Naive thymus-derived CD4-positive, alpha-beta T cell (primary cell): ENCODE measurements at regions of chr4 and their contacts with region 1.

Region 1: DNA sequence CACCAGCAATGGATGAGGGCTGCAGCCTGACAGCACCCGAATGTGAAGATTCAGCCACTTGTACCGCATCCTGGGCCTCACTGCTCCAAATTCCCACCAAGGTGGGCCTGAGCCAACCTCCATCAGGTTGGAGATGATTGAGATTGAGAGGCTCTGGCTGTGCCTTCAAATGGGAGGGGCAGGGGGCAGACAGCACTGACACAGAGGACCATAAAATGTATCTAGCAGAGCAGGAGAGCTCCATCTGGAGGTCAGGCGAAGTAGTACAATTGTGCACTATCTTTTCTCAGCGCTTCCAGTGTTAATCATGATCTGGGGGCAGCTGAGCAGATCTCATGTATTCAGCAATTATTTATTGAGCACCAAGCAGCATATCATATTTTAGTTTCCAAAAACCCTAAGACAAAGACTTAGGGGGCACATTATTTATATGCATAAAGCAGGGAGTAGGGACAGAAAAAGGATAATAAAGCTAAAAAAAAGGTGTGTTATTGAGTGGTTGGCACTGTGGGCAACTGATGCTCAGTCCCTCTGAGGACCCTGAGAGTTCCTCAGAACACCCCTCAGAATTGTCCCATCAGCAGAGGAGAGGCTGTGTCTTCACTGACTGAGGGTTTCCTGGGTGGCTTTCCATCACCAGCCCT is 31.6 kb upstream of the C1QTNF7 start:
- DNase-seq: peak in 7 of 9 donors; percentile 31 to 57 (median 50)
- ATAC-seq: peak; percentile 85
- H3K4me3 ChIP-seq: no peak overlapping the region
- H3K4me3 Mint-ChIP-seq: no peak overlapping the region
- H3K27ac ChIP-seq: no peak overlapping the region
- H3K27ac Mint-ChIP-seq: peak overlapping the region in 1 of 9 donors; percentile 68
- H3K4me1 ChIP-seq: peaks cover 7 to 12% of the 10 kb centered on the region in 2 donors
- H3K4me1 Mint-ChIP-seq: peaks cover 10 to 52% (median 37%) of the 10 kb centered on the region in 7 donors
- H3K27me3 ChIP-seq: no peaks in the 10 kb centered on the region
- H3K27me3 Mint-ChIP-seq: no peaks in the 10 kb centered on the region

Region 2: GRCh38 chr4:14853176-14853943 is 542.9 kb before region 1 on chr4:
- CTCF ChIA-PET with region 1: no interaction called
- POLR2A ChIA-PET with region 1: no interaction called
- intact Hi-C with region 1: no loop called
- DNase-seq: no peak
- ATAC-seq: no peak
- H3K4me3 ChIP-seq: no peak overlapping the region
- H3K4me3 Mint-ChIP-seq: no peak overlapping the region
- H3K27ac ChIP-seq: no peak overlapping the region
- H3K27ac Mint-ChIP-seq: no peak overlapping the region
- H3K4me1 ChIP-seq: no peaks in the 10 kb centered on the region
- H3K4me1 Mint-ChIP-seq: peaks cover 0 to 22% (median 0%) of the 10 kb centered on the region in 7 donors
- H3K27me3 ChIP-seq: no peaks in the 10 kb centered on the region
- H3K27me3 Mint-ChIP-seq: peaks cover 0 to 32% (median 18%) of the 10 kb centered on the region in 5 donors

Region 3: DNA sequence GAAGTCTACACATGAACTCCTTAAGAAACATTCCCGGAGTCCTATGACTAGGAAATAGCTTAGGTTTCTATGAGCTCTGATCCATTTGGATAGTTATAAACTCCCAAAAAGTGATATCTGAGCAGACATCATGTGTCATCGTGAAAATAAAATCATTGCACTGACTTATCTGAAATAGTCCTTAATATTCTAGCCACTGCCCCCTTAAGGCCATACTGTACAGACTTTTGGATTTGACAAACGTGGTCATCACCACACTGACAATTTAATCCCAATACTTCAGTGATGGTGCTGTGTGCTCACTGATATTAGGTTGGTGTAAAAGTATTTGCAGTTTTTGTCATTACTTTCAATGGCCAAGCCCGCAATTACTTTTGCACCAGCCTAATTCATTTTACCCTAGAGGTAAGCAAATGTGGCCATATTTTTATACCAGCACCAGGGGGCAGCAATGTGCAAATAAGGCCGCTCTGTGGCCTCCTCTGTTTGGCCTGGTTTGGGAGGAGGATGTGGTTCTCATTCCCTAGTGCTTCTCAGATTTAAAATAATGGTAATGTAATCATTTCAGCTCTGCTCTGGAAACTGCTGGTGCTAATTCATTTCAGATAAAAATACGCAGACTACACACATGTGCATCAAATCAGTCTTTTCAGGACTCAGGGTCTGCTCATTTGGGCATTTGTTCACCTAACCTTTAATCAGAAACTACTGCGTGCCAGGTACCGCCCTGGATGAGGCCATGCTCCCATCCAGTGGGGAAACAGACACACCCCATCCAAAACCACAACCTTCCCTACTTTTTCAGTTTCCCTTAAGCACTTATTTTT is 164.8 kb before region 1 on chr4:
- CTCF ChIA-PET with region 1: interaction called, 7 read pairs
- POLR2A ChIA-PET with region 1: no interaction called
- intact Hi-C with region 1: loop called (anchors 1 kb)
- DNase-seq: peak; percentile 45 to 72 (median 69)
- ATAC-seq: peak; percentile 86
- H3K4me3 ChIP-seq: no peak overlapping the region
- H3K4me3 Mint-ChIP-seq: no peak overlapping the region
- H3K27ac ChIP-seq: no peak overlapping the region
- H3K27ac Mint-ChIP-seq: peak overlapping the region in 4 of 9 donors; percentile 11 to 68 (median 44)
- H3K4me1 ChIP-seq: peaks cover 0 to 27% of the 10 kb centered on the region in 2 donors
- H3K4me1 Mint-ChIP-seq: peaks cover 24 to 39% (median 35%) of the 10 kb centered on the region in 7 donors
- H3K27me3 ChIP-seq: no peaks in the 10 kb centered on the region
- H3K27me3 Mint-ChIP-seq: peaks cover 0 to 3% (median 0%) of the 10 kb centered on the region in 5 donors

Region 4: DNA sequence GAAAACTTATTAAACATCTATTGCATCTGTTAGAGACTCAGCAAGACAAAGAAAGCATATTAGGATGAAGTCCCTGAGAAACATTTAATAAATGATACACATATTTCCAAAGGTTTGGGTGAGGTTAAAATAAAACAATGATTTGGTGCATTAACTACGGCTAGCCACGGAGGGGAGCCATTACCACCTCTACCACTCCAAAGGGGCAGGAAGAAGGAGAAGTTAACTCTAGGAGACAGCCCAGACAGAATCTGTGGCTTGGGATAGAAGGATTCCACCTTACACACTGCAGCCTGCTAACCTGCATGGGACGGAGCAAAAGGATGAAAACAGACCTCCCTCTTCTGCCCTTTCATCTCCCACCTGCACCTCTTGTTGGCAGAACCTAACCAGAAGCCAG is 157.6 kb before region 1 on chr4:
- CTCF ChIA-PET with region 1: interaction called, 3 read pairs
- POLR2A ChIA-PET with region 1: no interaction called
- intact Hi-C with region 1: loop called (anchors 1 kb)
- DNase-seq: peak in 5 of 9 donors; percentile 24 to 43 (median 32)
- ATAC-seq: peak; percentile 80
- H3K4me3 ChIP-seq: no peak overlapping the region
- H3K4me3 Mint-ChIP-seq: no peak overlapping the region
- H3K27ac ChIP-seq: no peak overlapping the region
- H3K27ac Mint-ChIP-seq: no peak overlapping the region
- H3K4me1 ChIP-seq: peaks cover 0 to 8% of the 10 kb centered on the region in 2 donors
- H3K4me1 Mint-ChIP-seq: peaks cover 9 to 14% (median 11%) of the 10 kb centered on the region in 7 donors
- H3K27me3 ChIP-seq: no peaks in the 10 kb centered on the region
- H3K27me3 Mint-ChIP-seq: no peaks in the 10 kb centered on the region

Region 5: GRCh38 chr4:15375667-15376066 is 20.6 kb before region 1 on chr4:
- CTCF ChIA-PET with region 1: interaction called, 8 read pairs
- POLR2A ChIA-PET with region 1: no interaction called
- intact Hi-C with region 1: loop called in 1 of 2 experiments (anchors 2 kb)
- DNase-seq: peak in 6 of 9 donors; percentile 7 to 44 (median 40)
- ATAC-seq: peak; percentile 63
- H3K4me3 ChIP-seq: no peak overlapping the region
- H3K4me3 Mint-ChIP-seq: peak overlapping the region in 7 of 10 donors; percentile 0 to 59 (median 20)
- H3K27ac ChIP-seq: no peak overlapping the region
- H3K27ac Mint-ChIP-seq: peak overlapping the region in 7 of 9 donors; percentile 11 to 95 (median 81)
- H3K4me1 ChIP-seq: peaks cover 0 to 13% of the 10 kb centered on the region in 2 donors
- H3K4me1 Mint-ChIP-seq: peaks cover 16 to 52% (median 43%) of the 10 kb centered on the region in 7 donors
- H3K27me3 ChIP-seq: no peaks in the 10 kb centered on the region
- H3K27me3 Mint-ChIP-seq: peaks cover 0 to 4% (median 0%) of the 10 kb centered on the region in 5 donors

Region 6: GRCh38 chr4:15410750-15411149 is 14.5 kb after region 1 on chr4:
- CTCF ChIA-PET with region 1: interaction called, 11 read pairs
- POLR2A ChIA-PET with region 1: interaction called, 6 read pairs
- intact Hi-C with region 1: loop called in 1 of 2 experiments (anchors 1 kb)
- DNase-seq: peak in 6 of 9 donors; percentile 30 to 56 (median 42)
- ATAC-seq: peak; percentile 71
- H3K4me3 ChIP-seq: peak overlapping the region; percentile 41
- H3K4me3 Mint-ChIP-seq: peak overlapping the region; percentile 43 to 82 (median 70)
- H3K27ac ChIP-seq: peak overlapping the region; percentile 41
- H3K27ac Mint-ChIP-seq: peak overlapping the region in 8 of 9 donors; percentile 73 to 93 (median 85)
- H3K4me1 ChIP-seq: peaks cover 12 to 46% of the 10 kb centered on the region in 2 donors
- H3K4me1 Mint-ChIP-seq: peaks cover 25 to 68% (median 63%) of the 10 kb centered on the region in 7 donors
- H3K27me3 ChIP-seq: no peaks in the 10 kb centered on the region
- H3K27me3 Mint-ChIP-seq: peaks cover 0 to 3% (median 0%) of the 10 kb centered on the region in 5 donors

Region 7: GRCh38 chr4:15423285-15423711 is 27.0 kb after region 1 on chr4:
- CTCF ChIA-PET with region 1: no interaction called
- POLR2A ChIA-PET with region 1: no interaction called
- intact Hi-C with region 1: no loop called
- DNase-seq: no peak
- ATAC-seq: no peak
- H3K4me3 ChIP-seq: no peak overlapping the region
- H3K4me3 Mint-ChIP-seq: no peak overlapping the region
- H3K27ac ChIP-seq: no peak overlapping the region
- H3K27ac Mint-ChIP-seq: peak overlapping the region in 2 of 9 donors; percentile 30 to 79
- H3K4me1 ChIP-seq: no peaks in the 10 kb centered on the region
- H3K4me1 Mint-ChIP-seq: peaks cover 4 to 24% (median 16%) of the 10 kb centered on the region in 7 donors
- H3K27me3 ChIP-seq: no peaks in the 10 kb centered on the region
- H3K27me3 Mint-ChIP-seq: no peaks in the 10 kb centered on the region

Region 8: GRCh38 chr4:15457406-15458201 is 61.3 kb after region 1 on chr4:
- CTCF ChIA-PET with region 1: interaction called, 25 read pairs
- POLR2A ChIA-PET with region 1: interaction called, 3 read pairs
- intact Hi-C with region 1: loop called (anchors 1 kb)
- DNase-seq: peak in 6 of 9 donors; percentile 23 to 62 (median 56)
- ATAC-seq: peak; percentile 89
- H3K4me3 ChIP-seq: no peak overlapping the region
- H3K4me3 Mint-ChIP-seq: peak overlapping the region in 2 of 10 donors; percentile 3 to 17
- H3K27ac ChIP-seq: no peak overlapping the region
- H3K27ac Mint-ChIP-seq: peak overlapping the region in 3 of 9 donors; percentile 6 to 59 (median 14)
- H3K4me1 ChIP-seq: no peaks in the 10 kb centered on the region
- H3K4me1 Mint-ChIP-seq: peaks cover 0 to 12% (median 7%) of the 10 kb centered on the region in 7 donors
- H3K27me3 ChIP-seq: no peaks in the 10 kb centered on the region
- H3K27me3 Mint-ChIP-seq: peaks cover 0 to 25% (median 0%) of the 10 kb centered on the region in 5 donors

Region 9: GRCh38 chr4:16006791-16007446 is 610.6 kb after region 1 on chr4:
- CTCF ChIA-PET with region 1: no interaction called
- POLR2A ChIA-PET with region 1: no interaction called
- intact Hi-C with region 1: no loop called
- DNase-seq: no peak
- ATAC-seq: no peak
- H3K4me3 ChIP-seq: no peak overlapping the region
- H3K4me3 Mint-ChIP-seq: no peak overlapping the region
- H3K27ac ChIP-seq: no peak overlapping the region
- H3K27ac Mint-ChIP-seq: no peak overlapping the region
- H3K4me1 ChIP-seq: no peaks in the 10 kb centered on the region
- H3K4me1 Mint-ChIP-seq: no peaks in the 10 kb centered on the region
- H3K27me3 ChIP-seq: no peaks in the 10 kb centered on the region
- H3K27me3 Mint-ChIP-seq: peaks cover 3 to 14% (median 11%) of the 10 kb centered on the region in 5 donors